ENCODE measurements at regions of chr15 and their contacts with region 1.

Region 1: GRCh38 chr15:45037936-45038335 is 14.9 kb downstream of the SORD start:
- DNase-seq: no peak
- H3K4me3 Mint-ChIP-seq: no peak overlapping the region
- H3K27ac Mint-ChIP-seq: no peak overlapping the region
- H3K4me1 Mint-ChIP-seq: peaks cover 23% of the 10 kb centered on the region
- H3K27me3 Mint-ChIP-seq: no peaks in the 10 kb centered on the region

Region 2: GRCh38 chr15:44836094-44836493 is 201.8 kb before region 1 on chr15:
- CTCF ChIA-PET with region 1: no interaction called
- POLR2A ChIA-PET with region 1: interaction called, 11 read pairs
- DNase-seq: no peak
- H3K4me3 Mint-ChIP-seq: no peak overlapping the region
- H3K27ac Mint-ChIP-seq: no peak overlapping the region
- H3K4me1 Mint-ChIP-seq: peaks cover 3% of the 10 kb centered on the region
- H3K27me3 Mint-ChIP-seq: no peaks in the 10 kb centered on the region

Region 3: GRCh38 chr15:45009046-45009445 is 28.9 kb before region 1 on chr15:
- CTCF ChIA-PET with region 1: no interaction called
- POLR2A ChIA-PET with region 1: no interaction called
- DNase-seq: no peak
- H3K4me3 Mint-ChIP-seq: no peak overlapping the region
- H3K27ac Mint-ChIP-seq: no peak overlapping the region
- H3K4me1 Mint-ChIP-seq: no peaks in the 10 kb centered on the region
- H3K27me3 Mint-ChIP-seq: peaks cover 10% of the 10 kb centered on the region